AG04450 (cell line): ENCODE measurements at regions of chr3 and their contacts with region 1.

Region 1: GRCh38 chr3:136042608-136043221 is 77.2 kb downstream of the PPP2R3A start:
- DNase-seq: no peak
- H3K4me3 ChIP-seq: no peak overlapping the region
- H3K27ac ChIP-seq: no peak overlapping the region
- H3K27me3 ChIP-seq: no peaks in the 10 kb centered on the region
- CTCF ChIP-seq: peak; percentile 66

Region 2: DNA sequence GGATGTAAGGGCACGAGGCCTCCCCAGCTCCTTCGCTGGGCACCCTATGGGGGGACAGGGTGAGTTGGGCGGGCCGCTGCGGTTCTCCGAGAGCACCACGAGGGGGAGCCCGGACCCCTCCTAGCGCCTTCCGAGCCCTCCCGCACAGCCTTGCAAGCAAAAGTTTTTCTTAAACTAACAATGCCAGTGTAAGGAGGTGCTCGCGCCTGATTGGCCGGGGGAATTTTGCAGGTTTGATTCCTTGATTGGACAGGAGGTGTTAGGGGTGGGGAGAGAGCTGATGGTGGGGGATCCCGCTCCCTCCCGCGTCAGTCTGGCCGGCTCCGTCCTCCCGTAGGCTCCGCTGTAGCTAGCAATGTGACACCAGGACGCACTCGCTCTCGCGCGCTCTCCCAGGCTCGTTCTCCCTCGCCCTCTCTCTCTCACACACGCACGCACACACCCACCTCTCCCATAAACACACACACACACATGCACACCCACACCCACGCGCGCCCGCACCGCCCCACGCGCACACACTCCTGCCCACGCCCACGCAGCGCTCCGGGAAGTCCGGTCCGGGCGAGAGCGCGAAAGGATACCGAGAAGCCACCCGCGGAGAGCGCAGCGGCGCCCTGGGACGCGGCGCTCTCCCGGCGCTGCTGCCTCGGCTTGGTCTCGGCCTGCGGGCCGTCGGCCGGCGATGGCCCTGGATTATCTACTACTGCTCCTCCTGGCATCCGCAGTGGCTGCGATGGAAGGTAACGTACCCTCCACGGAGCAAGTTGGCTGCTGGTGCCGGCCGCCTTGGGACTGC is 1247.6 kb before region 1 on chr3 and contains the start of gene EPHB1:
- CTCF ChIA-PET with region 1: interaction called, 13 read pairs
- POLR2A ChIA-PET with region 1: no interaction called
- DNase-seq: peak; percentile 63
- H3K4me3 ChIP-seq: peak within 1 kb of the TSS; percentile 57
- H3K27ac ChIP-seq: no peak within 1 kb of the TSS
- H3K27me3 ChIP-seq: peaks cover 57% of the 10 kb centered on the region
- CTCF ChIP-seq: peak; percentile 91
- polyA plus RNA-seq, gene EPHB1: 0.07 and 0.11 TPM in 2 replicates

Region 3: DNA sequence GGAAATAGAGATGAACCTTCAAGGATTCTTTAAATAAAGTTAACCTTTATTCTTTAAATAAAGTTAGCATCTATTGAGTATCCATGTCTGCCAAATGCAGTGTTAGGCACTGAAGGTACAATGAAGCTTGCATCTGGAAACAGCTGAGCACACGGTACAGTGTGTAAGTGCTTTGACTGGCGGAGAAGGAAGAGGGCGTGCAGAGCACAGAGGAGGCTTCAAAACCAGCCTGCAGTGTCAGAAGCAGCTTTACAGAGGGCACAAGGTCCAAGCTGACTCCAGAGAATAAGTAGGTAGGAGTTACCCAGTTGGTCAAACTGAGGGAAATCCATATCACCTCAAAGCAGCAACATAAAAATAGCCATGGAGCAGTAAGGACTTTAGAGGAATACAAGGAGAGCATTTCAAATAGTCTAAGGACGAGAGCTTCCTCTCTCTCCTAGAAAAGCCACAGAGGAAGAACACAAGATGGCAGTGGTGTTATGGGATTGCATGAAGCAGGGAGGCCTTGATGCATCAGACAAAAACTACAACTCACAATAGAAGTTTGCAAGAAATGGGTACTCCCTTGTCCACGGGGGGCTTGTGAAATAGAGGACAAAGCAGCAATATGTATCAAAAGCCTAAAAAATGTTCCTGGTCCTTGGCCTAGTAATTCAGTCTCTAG is 137.5 kb before region 1 on chr3:
- CTCF ChIA-PET with region 1: interaction called, 85 read pairs
- POLR2A ChIA-PET with region 1: no interaction called
- DNase-seq: no peak
- H3K4me3 ChIP-seq: no peak overlapping the region
- H3K27ac ChIP-seq: no peak overlapping the region
- H3K27me3 ChIP-seq: no peaks in the 10 kb centered on the region
- CTCF ChIP-seq: peak; percentile 47

Region 4: GRCh38 chr3:135929670-135930069 is 113.0 kb before region 1 on chr3:
- CTCF ChIA-PET with region 1: interaction called, 352 read pairs
- POLR2A ChIA-PET with region 1: no interaction called
- DNase-seq: no peak
- H3K4me3 ChIP-seq: no peak overlapping the region
- H3K27ac ChIP-seq: no peak overlapping the region
- H3K27me3 ChIP-seq: no peaks in the 10 kb centered on the region
- CTCF ChIP-seq: no peak

Region 5: GRCh38 chr3:135965506-135966270 is 77.0 kb before region 1 on chr3 and contains the start of gene PPP2R3A:
- CTCF ChIA-PET with region 1: interaction called, 12 read pairs
- POLR2A ChIA-PET with region 1: interaction called, 10 read pairs
- DNase-seq: peak; percentile 55
- H3K4me3 ChIP-seq: peak within 1 kb of the TSS; percentile 75
- H3K27ac ChIP-seq: peak within 1 kb of the TSS; percentile 87
- H3K27me3 ChIP-seq: no peaks in the 10 kb centered on the region
- CTCF ChIP-seq: no peak
- polyA plus RNA-seq, gene PPP2R3A: 19.8 and 26.6 TPM in 2 replicates

Region 6: GRCh38 chr3:135989242-135989641 is 53.5 kb before region 1 on chr3:
- CTCF ChIA-PET with region 1: interaction called, 25 read pairs
- POLR2A ChIA-PET with region 1: no interaction called
- DNase-seq: no peak
- H3K4me3 ChIP-seq: no peak overlapping the region
- H3K27ac ChIP-seq: no peak overlapping the region
- H3K27me3 ChIP-seq: no peaks in the 10 kb centered on the region
- CTCF ChIP-seq: no peak

Region 7: GRCh38 chr3:136055491-136055890 is 12.8 kb after region 1 on chr3:
- CTCF ChIA-PET with region 1: interaction called, 33 read pairs
- POLR2A ChIA-PET with region 1: no interaction called
- DNase-seq: no peak
- H3K4me3 ChIP-seq: no peak overlapping the region
- H3K27ac ChIP-seq: no peak overlapping the region
- H3K27me3 ChIP-seq: no peaks in the 10 kb centered on the region
- CTCF ChIP-seq: no peak